ENCODE measurements at regions of chr3 and their contacts with region 1.

Region 1: GRCh38 chr3:150603153-150603979 is at the start of gene SELENOT:
- DNase-seq: peak; percentile 88 to 95
- ATAC-seq: peak; percentile 94 to 96
- H3K4me3 ChIP-seq: peak within 1 kb of the TSS; percentile 75 to 95 (median 86)
- H3K27ac ChIP-seq: peak within 1 kb of the TSS; percentile 93 to 98 (median 96)
- H3K4me1 ChIP-seq: peaks cover 41 to 50% of the 10 kb centered on the region in 2 donors
- H3K27me3 ChIP-seq: no peaks in the 10 kb centered on the region
- CTCF ChIP-seq: peak; percentile 27 to 58 (median 49)
- POLR2A ChIP-seq: peak; percentile 93
- total RNA-seq, gene SELENOT: 69.6 to 83.1 (median 76.2) TPM

Region 2: DNA sequence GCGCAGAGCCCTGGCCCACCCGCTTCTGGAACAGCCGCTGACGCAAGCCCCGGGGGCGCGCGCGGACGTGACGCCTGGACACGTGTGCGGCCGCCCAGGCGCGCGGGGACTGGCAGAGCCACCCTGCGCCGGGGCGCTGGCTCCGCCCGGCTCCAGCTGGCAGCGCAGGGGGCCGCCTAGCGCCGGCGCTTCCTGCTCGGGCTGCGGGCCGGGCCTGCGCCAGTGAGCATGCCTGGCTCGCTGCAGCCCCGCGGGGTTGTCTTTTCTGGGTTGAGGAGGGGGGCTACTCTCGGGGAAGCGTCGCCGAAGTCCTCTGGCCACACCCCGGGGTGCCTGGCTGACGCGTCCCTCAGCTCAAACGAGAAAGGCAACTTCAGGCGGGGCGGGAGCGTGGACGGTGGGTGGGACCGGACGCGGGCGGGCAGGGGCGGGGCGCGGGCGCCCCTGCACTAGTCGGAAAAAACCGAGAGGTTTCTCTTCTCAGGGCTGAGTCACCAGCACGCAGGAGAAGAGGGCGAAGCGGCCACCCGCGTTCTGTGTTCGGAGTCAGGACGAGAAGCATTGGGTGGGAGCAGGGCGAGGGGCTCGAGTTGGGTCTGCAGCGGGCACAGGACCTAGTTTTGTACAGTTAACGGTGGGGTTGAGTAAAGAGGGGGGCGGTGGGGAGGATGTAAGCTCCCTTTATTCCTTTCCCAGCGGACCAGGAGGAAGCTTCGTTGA is 159.9 kb after region 1 on chr3 and contains the start of gene SIAH2:
- in situ Hi-C with region 1: loop called in 1 of 4 experiments (anchors 10 kb)
- intact Hi-C with region 1: loop called (anchors 5 kb)
- DNase-seq: peak; percentile 85 to 88
- ATAC-seq: peak; percentile 79 to 84
- H3K4me3 ChIP-seq: peak within 1 kb of the TSS; percentile 61 to 80 (median 65)
- H3K27ac ChIP-seq: peak within 1 kb of the TSS; percentile 92 to 99 (median 96)
- H3K4me1 ChIP-seq: peaks cover 28 to 33% of the 10 kb centered on the region in 2 donors
- H3K27me3 ChIP-seq: no peaks in the 10 kb centered on the region
- CTCF ChIP-seq: peak in 1 of 5 experiments; percentile 21
- POLR2A ChIP-seq: peak; percentile 87 to 98
- total RNA-seq, gene SIAH2: 10.9 to 25.6 (median 20.0) TPM